AG04450 (cell line): ENCODE measurements at regions of chr11 and their contacts with region 1.

Region 1: GRCh38 chr11:117817368-117818040 is 7.0 kb downstream of the FXYD2 start:
- DNase-seq: peak; percentile 51
- H3K4me3 ChIP-seq: no peak overlapping the region
- H3K27ac ChIP-seq: no peak overlapping the region
- H3K27me3 ChIP-seq: no peaks in the 10 kb centered on the region
- CTCF ChIP-seq: peak; percentile 100

Region 2: DNA sequence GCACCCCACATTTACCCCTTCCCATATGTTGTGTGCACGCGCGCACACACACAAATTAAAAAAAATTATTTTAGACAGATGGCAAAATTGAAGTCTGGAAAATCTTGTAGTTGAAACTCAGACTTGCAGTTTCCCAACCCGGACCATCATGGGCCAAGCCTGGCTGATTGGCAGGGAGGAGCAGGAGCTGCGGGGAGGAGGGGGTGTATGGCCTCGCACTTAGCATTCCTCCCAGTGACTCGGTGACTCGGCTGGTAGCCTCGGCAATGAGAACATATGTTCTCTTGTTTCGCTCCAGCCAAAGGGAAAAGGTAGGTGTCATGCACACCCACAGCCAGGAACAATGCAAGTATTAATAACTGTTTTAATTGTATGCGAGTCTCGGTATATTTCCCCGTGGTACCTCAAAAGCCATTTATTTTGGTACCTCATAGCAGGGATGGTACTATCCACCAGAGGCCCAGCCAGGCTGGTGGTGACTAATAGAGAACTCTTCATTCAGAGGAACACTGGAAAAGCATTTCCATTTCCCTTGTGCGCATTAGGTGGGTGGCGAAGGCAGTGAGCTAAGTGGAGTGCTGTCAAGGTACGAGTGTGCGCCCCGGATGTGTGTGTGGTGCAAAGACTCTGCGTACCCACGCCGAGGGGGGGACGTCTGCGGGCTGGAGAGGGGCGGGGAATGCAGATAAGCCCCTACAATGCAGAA is 113.0 kb before region 1 on chr11:
- CTCF ChIA-PET with region 1: no interaction called
- POLR2A ChIA-PET with region 1: no interaction called
- DNase-seq: no peak
- H3K4me3 ChIP-seq: no peak overlapping the region
- H3K27ac ChIP-seq: no peak overlapping the region
- H3K27me3 ChIP-seq: peaks cover 6% of the 10 kb centered on the region
- CTCF ChIP-seq: no peak

Region 3: GRCh38 chr11:117828611-117829368 is 11.3 kb after region 1 on chr11:
- CTCF ChIA-PET with region 1: interaction called, 38 read pairs
- POLR2A ChIA-PET with region 1: interaction called, 3 read pairs
- DNase-seq: peak; percentile 51
- H3K4me3 ChIP-seq: no peak overlapping the region
- H3K27ac ChIP-seq: no peak overlapping the region
- H3K27me3 ChIP-seq: peaks cover 16% of the 10 kb centered on the region
- CTCF ChIP-seq: no peak

Region 4: DNA sequence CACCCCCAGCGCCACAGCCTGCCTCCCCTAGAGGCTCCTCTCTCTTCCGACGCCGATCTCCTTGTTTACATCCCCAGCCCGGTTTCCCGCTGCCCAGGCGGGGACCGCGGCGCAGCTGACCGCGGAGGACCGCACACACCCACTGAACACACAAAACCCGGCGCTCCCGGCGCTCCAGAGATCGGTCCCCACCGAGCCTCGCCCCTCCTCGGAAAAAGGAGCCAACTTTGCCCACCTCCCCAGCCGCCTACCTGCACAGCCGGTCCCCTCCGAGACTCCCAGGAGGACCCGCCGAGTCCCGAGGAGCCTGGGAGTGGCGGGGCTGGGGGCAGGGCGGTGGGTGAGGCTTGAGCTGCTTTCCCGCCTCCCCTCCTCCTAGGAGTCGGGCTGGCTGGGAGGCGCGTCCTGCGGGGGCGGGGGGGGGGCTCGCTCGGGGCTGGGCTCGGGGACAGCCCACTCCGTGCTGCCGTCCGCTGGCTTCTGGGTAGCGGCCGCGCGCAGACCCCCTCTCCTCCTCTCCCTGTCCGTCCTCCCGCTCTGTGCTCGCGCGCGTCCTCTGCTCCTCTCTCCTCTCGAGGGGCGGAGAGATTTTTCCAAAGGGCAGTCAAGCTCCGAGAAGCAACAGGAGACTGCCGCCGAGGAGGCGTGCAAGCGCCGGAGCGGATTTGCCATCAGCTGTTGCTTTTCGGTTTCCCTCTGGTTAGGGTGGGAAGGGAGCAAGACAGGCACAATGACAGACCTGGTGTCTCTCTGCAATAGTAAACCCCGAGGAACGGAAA is 59.0 kb after region 1 on chr11 and contains the start of gene FXYD6:
- CTCF ChIA-PET with region 1: interaction called, 10 read pairs
- POLR2A ChIA-PET with region 1: no interaction called
- DNase-seq: no peak
- H3K4me3 ChIP-seq: peak within 1 kb of the TSS; percentile 59
- H3K27ac ChIP-seq: no peak within 1 kb of the TSS
- H3K27me3 ChIP-seq: peaks cover 50% of the 10 kb centered on the region
- CTCF ChIP-seq: no peak
- polyA plus RNA-seq, gene FXYD6: 19.8 and 21.4 TPM in 2 replicates

Region 5: DNA sequence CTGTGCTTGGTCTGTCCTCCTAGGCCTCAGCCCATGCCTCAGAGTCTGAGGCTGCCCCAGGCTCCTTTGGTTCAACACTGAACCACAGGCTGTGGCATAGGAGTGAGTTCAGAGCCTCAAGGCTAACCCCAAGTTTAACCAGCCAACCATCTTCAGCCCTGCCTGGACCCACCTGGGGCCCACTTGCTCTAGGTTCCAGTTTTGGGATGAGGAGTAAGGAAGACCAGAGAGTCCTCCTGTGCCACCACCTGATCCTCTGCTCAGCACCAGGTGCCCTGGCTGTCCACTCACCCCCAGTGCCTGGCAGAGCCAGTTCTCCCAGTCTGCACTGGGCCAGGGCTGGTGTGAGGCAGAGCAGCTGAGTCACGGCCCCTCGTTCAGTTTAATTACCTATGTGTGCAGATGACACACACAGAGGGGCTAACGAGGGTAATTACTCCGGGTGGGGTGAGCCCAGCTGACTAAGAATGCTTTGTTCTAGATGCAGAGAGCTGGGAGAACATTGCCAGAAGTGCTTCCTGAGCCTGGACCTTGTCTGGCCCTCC is 123.7 kb after region 1 on chr11:
- CTCF ChIA-PET with region 1: interaction called, 197 read pairs
- POLR2A ChIA-PET with region 1: no interaction called
- DNase-seq: no peak
- H3K4me3 ChIP-seq: no peak overlapping the region
- H3K27ac ChIP-seq: no peak overlapping the region
- H3K27me3 ChIP-seq: peaks cover 15% of the 10 kb centered on the region
- CTCF ChIP-seq: no peak